Activated CD8-positive, alpha-beta memory T cell treated with anti-CD3 and anti-CD28 coated beads, Interleukin-2, amount 10 ng/mL, durations not matched to agents 7 days and 5 days (primary cell): ENCODE measurements at regions of chr2 and their contacts with region 1.

Region 1: GRCh38 chr2:10072656-10073480 is 7.3 kb downstream of the CYS1 start:
- DNase-seq: peak; percentile 86
- ATAC-seq: peak; percentile 95
- H3K4me3 Mint-ChIP-seq: no peak overlapping the region
- H3K27ac Mint-ChIP-seq: no peak overlapping the region
- H3K4me1 Mint-ChIP-seq: peaks cover 16% of the 10 kb centered on the region
- H3K27me3 Mint-ChIP-seq: peaks cover 51% of the 10 kb centered on the region

Region 2: GRCh38 chr2:9909106-9909505 is 163.8 kb before region 1 on chr2:
- CTCF ChIA-PET with region 1: no interaction called
- DNase-seq: no peak
- ATAC-seq: no peak
- H3K4me3 Mint-ChIP-seq: no peak overlapping the region
- H3K27ac Mint-ChIP-seq: no peak overlapping the region
- H3K4me1 Mint-ChIP-seq: peaks cover 2% of the 10 kb centered on the region
- H3K27me3 Mint-ChIP-seq: no peaks in the 10 kb centered on the region

Region 3: DNA sequence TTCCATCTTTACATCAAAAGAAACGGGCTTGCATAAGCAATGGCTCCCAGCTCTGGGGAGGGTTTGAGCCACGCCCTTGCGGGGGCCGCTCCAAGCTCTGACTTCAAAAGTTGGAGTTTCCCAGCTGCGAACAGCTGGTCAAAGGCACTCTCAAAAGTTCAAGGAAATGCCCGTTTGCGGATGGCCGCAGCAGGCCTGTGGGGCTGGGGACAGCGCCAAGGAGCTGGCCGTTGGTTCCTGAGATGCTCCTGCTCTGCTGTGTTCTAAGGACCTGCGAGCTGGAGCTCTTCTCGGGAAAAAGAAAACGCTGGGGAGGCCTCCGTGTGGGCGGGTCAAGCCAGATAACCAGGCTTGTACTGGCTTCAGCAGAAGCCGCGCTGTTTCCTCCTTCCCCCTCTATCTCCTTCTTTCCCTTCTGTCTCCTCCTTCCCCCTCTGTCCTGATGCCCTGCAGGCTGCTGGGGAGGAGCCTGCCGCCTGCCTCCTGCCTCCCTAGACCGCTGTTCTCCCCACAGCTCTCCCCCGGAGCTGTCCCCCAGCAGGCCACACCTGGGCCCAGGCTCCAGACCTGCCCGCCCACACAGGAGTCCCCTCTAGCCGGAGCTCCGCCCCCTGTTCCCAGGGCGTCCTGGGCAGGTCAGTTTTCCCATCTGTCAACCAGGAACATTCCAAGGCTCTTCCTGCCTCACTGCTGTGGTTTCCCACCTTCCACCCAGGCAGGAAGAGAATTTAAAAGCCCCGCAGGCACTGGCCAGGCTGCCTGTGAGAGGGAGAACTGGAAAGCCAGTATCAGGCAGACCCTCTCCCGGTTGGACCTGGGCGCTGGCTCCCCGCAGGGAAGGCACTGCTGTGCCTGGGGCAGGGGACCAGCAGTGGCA is 15.4 kb before region 1 on chr2:
- CTCF ChIA-PET with region 1: interaction called, 51 read pairs
- DNase-seq: no peak
- ATAC-seq: no peak
- H3K4me3 Mint-ChIP-seq: no peak overlapping the region
- H3K27ac Mint-ChIP-seq: no peak overlapping the region
- H3K4me1 Mint-ChIP-seq: peaks cover 4% of the 10 kb centered on the region
- H3K27me3 Mint-ChIP-seq: no peaks in the 10 kb centered on the region

Region 4: GRCh38 chr2:10091182-10091888 is 18.5 kb after region 1 on chr2:
- CTCF ChIA-PET with region 1: interaction called, 117 read pairs
- DNase-seq: peak; percentile 63
- ATAC-seq: peak; percentile 64
- H3K4me3 Mint-ChIP-seq: peak overlapping the region; percentile 50
- H3K27ac Mint-ChIP-seq: no peak overlapping the region
- H3K4me1 Mint-ChIP-seq: peaks cover 11% of the 10 kb centered on the region
- H3K27me3 Mint-ChIP-seq: peaks cover 71% of the 10 kb centered on the region

Region 5: DNA sequence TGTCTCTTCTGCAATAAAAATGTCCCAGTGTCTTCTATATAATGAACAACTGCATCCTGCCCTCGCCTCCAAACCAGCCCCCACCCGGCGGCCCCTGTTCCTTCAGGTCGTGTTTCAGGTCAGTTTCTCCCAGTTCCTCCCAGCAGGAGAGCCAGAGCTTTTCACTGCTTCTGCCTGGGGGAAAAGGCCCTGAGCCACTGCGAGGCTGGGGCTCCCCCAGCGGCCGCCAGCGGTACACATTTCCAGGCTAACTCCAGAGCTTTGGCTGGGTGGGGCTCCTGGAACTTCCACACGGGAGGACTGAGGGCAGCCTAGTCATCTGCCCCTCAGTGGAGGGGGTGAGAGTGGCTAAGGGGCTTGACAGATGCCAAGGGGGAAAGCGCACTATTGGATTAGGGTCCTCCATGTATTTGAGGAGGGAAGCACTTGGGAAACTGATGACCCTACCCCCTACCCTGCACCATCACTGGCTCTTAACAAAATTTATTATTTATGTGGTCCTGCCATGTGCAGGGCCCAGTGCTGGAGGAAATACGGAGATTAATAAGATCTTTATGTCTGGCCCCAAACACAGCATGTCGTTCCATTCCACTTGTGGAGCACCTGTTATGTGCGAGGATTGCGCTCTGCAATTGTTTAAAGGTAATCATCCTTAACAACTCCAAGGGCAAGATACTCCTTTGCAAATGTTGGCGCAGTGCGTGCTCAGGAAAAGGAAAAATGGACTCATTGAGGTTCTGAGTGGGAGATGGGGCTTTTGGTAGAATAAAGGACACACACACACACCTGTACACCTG is 24.7 kb after region 1 on chr2:
- CTCF ChIA-PET with region 1: interaction called, 117 read pairs
- DNase-seq: peak; percentile 52
- ATAC-seq: peak; percentile 82
- H3K4me3 Mint-ChIP-seq: no peak overlapping the region
- H3K27ac Mint-ChIP-seq: no peak overlapping the region
- H3K4me1 Mint-ChIP-seq: peaks cover 2% of the 10 kb centered on the region
- H3K27me3 Mint-ChIP-seq: peaks cover 37% of the 10 kb centered on the region

Region 6: GRCh38 chr2:10122386-10123280 is 49.8 kb after region 1 on chr2 and contains the start of gene RRM2:
- CTCF ChIA-PET with region 1: interaction called, 84 read pairs
- DNase-seq: peak; percentile 98
- ATAC-seq: peak; percentile 80
- H3K4me3 Mint-ChIP-seq: peak within 1 kb of the TSS; percentile 97
- H3K27ac Mint-ChIP-seq: peak within 1 kb of the TSS; percentile 99
- H3K4me1 Mint-ChIP-seq: peaks cover 55% of the 10 kb centered on the region
- H3K27me3 Mint-ChIP-seq: no peaks in the 10 kb centered on the region
- total RNA-seq, gene RRM2: 506 to 648 TPM